Common myeloid progenitor, CD34-positive (primary cell): ENCODE measurements at regions of chr17 and their contacts with region 1.

Region 1: GRCh38 chr17:17675925-17676534 is 5.2 kb upstream of the RAI1 start:
- DNase-seq: peak in 2 of 3 donors; percentile 52 to 65
- H3K4me3 ChIP-seq: peak overlapping the region in 2 of 7 experiments; percentile 3 to 41
- H3K27ac ChIP-seq: no peak overlapping the region
- H3K4me1 ChIP-seq: peaks cover 4 to 61% (median 32%) of the 10 kb centered on the region in 4 experiments
- H3K27me3 ChIP-seq: no peaks in the 10 kb centered on the region

Region 2: GRCh38 chr17:17663160-17664063 is 12.6 kb before region 1 on chr17:
- CTCF ChIA-PET with region 1: interaction called, 20 read pairs
- POLR2A ChIA-PET with region 1: no interaction called
- DNase-seq: peak; percentile 90 to 98 (median 97)
- H3K4me3 ChIP-seq: no peak overlapping the region
- H3K27ac ChIP-seq: no peak overlapping the region
- H3K4me1 ChIP-seq: peaks cover 0 to 23% (median 8%) of the 10 kb centered on the region in 4 experiments
- H3K27me3 ChIP-seq: no peaks in the 10 kb centered on the region

Region 3: GRCh38 chr17:17739388-17740066 is 63.5 kb after region 1 on chr17:
- CTCF ChIA-PET with region 1: no interaction called
- POLR2A ChIA-PET with region 1: no interaction called
- DNase-seq: peak in 1 of 3 donors; percentile 31
- H3K4me3 ChIP-seq: no peak overlapping the region
- H3K27ac ChIP-seq: peak overlapping the region in 1 of 2 experiments; percentile 9
- H3K4me1 ChIP-seq: peaks cover 0 to 52% (median 45%) of the 10 kb centered on the region in 4 experiments
- H3K27me3 ChIP-seq: no peaks in the 10 kb centered on the region